ENCODE measurements at regions of chr21 and their contacts with region 1.

Region 1: GRCh38 chr21:32412162-32413014 is at the start of gene EVA1C:
- DNase-seq: peak; percentile 77 to 80
- ATAC-seq: peak; percentile 53 to 89 (median 58)
- H3K4me3 ChIP-seq: peak within 1 kb of the TSS; percentile 58 to 92 (median 78)
- H3K27ac ChIP-seq: peak within 1 kb of the TSS; percentile 95 to 100 (median 99)
- H3K4me1 ChIP-seq: peaks cover 7 to 71% (median 60%) of the 10 kb centered on the region in 9 donors
- H3K27me3 ChIP-seq: no peaks in the 10 kb centered on the region
- CTCF ChIP-seq: peak in 6 of 9 donors; percentile 4 to 53 (median 24)
- total RNA-seq, gene EVA1C: 12.1 to 34.9 (median 13.9) TPM

Region 2: GRCh38 chr21:32457360-32457840 is 45.0 kb after region 1 on chr21:
- intact Hi-C with region 1: loop called in 6 of 10 experiments (anchors 5 kb)
- DNase-seq: peak; percentile 36 to 52
- ATAC-seq: peak in 7 of 8 donors; percentile 9 to 61 (median 32)
- H3K4me3 ChIP-seq: no peak overlapping the region
- H3K27ac ChIP-seq: peak overlapping the region; percentile 27 to 83 (median 64)
- H3K4me1 ChIP-seq: peaks cover 15 to 36% (median 22%) of the 10 kb centered on the region in 9 donors
- H3K27me3 ChIP-seq: no peaks in the 10 kb centered on the region
- CTCF ChIP-seq: peak in 5 of 9 donors; percentile 8 to 43 (median 34)

Region 3: DNA sequence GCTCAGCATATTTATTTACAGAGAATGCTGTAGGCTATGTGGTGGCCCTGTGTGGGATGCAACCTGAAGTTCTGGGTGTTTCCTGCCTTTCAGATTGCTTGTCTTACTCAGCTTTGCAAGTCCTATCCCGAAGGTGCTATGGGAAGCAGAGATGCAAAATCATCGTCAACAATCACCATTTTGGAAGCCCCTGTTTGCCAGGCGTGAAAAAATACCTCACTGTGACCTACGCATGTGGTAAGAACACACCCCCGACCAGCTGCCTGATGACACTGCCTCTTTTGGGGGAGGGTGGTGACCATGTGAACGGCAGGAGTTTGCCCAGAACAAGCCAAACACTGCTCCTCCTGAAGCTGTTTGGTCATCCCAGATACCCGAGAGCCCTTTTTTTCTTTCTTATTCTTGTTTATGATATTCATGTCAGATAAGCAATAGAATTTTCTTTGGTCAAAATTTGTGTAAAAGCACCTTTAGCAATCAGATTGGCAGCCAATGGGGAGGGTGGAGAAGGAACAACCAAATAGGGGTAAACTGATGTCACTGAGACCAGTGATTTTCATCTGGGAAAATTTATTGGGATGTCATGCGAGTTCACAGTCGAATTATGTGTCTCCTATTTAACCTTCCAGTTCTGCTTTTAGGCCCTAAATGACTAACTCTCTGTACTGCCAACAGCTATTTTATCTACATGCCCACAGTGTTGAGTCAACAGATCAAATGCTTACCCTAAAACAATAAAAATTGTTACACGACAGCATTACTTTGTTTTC is 82.7 kb after region 1 on chr21:
- intact Hi-C with region 1: loop called in 1 of 10 experiments (anchors 5 kb)
- DNase-seq: no peak
- ATAC-seq: no peak
- H3K4me3 ChIP-seq: no peak overlapping the region
- H3K27ac ChIP-seq: peak overlapping the region in 4 of 10 donors; percentile 8 to 62 (median 16)
- H3K4me1 ChIP-seq: peaks cover 11 to 76% (median 44%) of the 10 kb centered on the region in 9 donors
- H3K27me3 ChIP-seq: no peaks in the 10 kb centered on the region
- CTCF ChIP-seq: no peak

Region 4: GRCh38 chr21:32520875-32521735 is 108.7 kb after region 1 on chr21:
- intact Hi-C with region 1: loop called in 5 of 10 experiments (anchors 2 to 5 kb)
- DNase-seq: peak; percentile 91 to 96
- ATAC-seq: peak; percentile 65 to 81 (median 78)
- H3K4me3 ChIP-seq: peak overlapping the region in 2 of 10 donors; percentile 2 to 7
- H3K27ac ChIP-seq: peak overlapping the region; percentile 43 to 93 (median 88)
- H3K4me1 ChIP-seq: peaks cover 30 to 74% (median 66%) of the 10 kb centered on the region in 9 donors
- H3K27me3 ChIP-seq: no peaks in the 10 kb centered on the region
- CTCF ChIP-seq: no peak

Region 5: DNA sequence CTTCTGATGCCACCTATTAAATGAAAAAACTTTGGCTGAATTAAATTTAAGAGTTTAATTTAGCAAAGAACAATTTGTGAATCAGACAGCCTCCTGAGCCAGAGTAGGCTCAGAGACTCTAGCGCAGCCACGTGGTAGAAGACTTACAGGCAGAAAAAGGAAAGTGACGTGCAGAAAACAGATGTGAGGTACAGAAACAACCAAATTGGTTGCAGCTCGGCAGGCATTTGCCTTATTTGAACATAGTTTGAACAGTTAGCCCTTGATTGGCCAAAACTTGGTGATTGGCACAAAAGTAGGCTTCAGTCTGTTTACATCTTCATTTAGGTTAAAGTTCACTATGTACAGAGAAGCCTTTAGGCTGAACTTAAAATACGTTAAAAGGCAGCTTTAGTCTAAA is 150.0 kb after region 1 on chr21:
- intact Hi-C with region 1: loop called in 2 of 10 experiments (anchors 5 kb)
- DNase-seq: peak in 1 of 2 donors; percentile 64
- ATAC-seq: peak in 7 of 8 donors; percentile 47 to 92 (median 82)
- H3K4me3 ChIP-seq: no peak overlapping the region
- H3K27ac ChIP-seq: peak overlapping the region in 8 of 10 donors; percentile 10 to 67 (median 57)
- H3K4me1 ChIP-seq: peaks cover 0 to 15% (median 6%) of the 10 kb centered on the region in 9 donors
- H3K27me3 ChIP-seq: no peaks in the 10 kb centered on the region
- CTCF ChIP-seq: peak; percentile 32 to 82 (median 58)

Region 6: DNA sequence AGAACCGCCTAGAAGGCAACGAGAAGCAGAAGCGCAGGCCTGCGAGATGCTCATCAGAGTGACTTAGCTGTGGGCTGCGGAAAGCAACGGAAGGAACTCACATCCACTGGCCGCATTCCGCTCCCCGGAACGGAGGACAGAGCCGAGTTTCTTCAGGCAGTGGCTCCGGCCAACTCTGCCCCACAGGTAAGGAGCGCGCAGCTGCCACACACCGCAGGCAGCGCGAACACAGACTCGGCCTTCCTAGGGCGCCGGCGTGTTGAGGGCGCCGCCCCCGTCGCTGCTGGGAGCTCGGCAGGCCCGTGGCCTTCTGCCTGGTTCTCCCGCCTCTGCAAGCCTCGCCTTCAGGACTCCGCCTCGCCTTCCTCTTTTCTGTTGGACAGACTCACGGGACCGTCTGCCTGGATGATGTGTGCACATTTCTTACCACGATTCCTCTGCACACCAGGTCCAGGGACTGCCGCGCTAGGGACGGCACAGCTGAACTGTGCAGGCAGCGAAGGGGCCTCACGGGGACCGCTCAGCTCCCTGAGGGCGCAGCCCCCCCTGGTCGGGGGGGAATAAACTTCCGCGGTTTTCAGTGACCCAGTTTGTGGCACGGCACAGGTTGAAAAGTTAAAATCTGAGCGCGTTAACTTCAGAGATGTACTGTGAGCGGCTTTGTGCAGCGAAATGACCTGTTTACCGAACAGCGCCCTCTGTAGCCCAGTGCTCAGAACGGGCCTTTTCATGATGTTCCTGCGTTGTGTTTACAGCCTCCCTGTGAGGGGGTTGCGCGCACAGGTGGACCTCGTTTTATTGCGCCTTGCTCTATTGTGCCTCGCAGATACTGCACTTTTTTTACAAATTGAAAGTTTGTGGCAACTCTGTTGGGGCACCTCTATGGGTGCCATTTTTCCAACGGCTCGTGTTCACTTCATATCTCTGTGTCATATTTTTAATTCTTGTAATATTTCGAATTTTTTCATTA is 157.2 kb after region 1 on chr21:
- intact Hi-C with region 1: loop called in 3 of 10 experiments (anchors 5 to 10 kb)
- DNase-seq: peak; percentile 64 to 82
- ATAC-seq: peak; percentile 90 to 96 (median 92)
- H3K4me3 ChIP-seq: peak overlapping the region; percentile 30 to 72 (median 62)
- H3K27ac ChIP-seq: peak overlapping the region in 9 of 10 donors; percentile 54 to 90 (median 83)
- H3K4me1 ChIP-seq: peaks cover 0 to 18% (median 9%) of the 10 kb centered on the region in 9 donors
- H3K27me3 ChIP-seq: no peaks in the 10 kb centered on the region
- CTCF ChIP-seq: peak; percentile 67 to 91 (median 84)